HepG2 (cell line): ENCODE measurements at regions of chr2 and their contacts with region 1.

Region 1: GRCh38 chr2:102615622-102616436 is 3.5 kb upstream of the SLC9A2 start:
- DNase-seq: peak; percentile 60
- ATAC-seq: peak; percentile 93
- H3K4me3 ChIP-seq: no peak overlapping the region
- H3K27ac ChIP-seq: no peak overlapping the region
- H3K4me1 ChIP-seq: peaks cover 12% of the 10 kb centered on the region; the same call in 1 of the 2 replicates
- H3K27me3 ChIP-seq: peaks cover 8 to 45% of the 10 kb centered on the region in 2 experiments
- CTCF ChIP-seq: peak; percentile 93
- EP300 ChIP-seq: no peak
- POLR2A ChIP-seq: no peak
- RAD21 ChIP-seq: peak; percentile 76

Region 2: DNA sequence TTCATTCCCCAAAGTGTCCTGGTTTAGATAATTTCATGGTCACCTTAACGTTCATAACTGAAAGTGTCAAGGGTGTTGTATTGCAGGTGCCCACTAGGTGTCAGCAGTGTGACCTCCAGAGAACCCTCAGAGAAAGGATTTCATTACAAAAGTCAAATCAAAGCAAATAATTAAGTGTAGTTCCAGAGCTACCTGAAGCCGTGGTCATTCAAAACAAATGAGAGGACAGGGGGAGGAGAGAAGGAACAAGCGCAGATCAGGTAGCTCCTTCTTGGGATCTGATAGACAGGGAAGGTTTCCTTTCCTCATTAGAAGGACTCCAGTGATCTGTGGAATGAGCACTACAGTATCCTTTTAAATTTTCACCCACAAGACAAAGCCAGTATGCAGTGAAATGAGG is 142.8 kb before region 1 on chr2 and contains the start of gene SLC9A4:
- CTCF ChIA-PET with region 1: interaction called, 16 read pairs
- POLR2A ChIA-PET with region 1: no interaction called
- in situ Hi-C with region 1: loop called (anchors 5 kb)
- intact Hi-C with region 1: loop called (anchors 1 kb)
- DNase-seq: peak; percentile 52
- ATAC-seq: peak; percentile 77
- H3K4me3 ChIP-seq: no peak within 1 kb of the TSS
- H3K27ac ChIP-seq: no peak within 1 kb of the TSS
- H3K4me1 ChIP-seq: no peaks in the 10 kb centered on the region
- H3K27me3 ChIP-seq: no peaks in the 10 kb centered on the region; a peak in 1 of 5 replicates
- CTCF ChIP-seq: peak; percentile 83
- EP300 ChIP-seq: no peak
- POLR2A ChIP-seq: no peak
- RAD21 ChIP-seq: no peak
- total RNA-seq, gene SLC9A4: not detected in 2 replicates

Region 3: GRCh38 chr2:102520028-102520427 is 95.8 kb before region 1 on chr2:
- CTCF ChIA-PET with region 1: interaction called, 19 read pairs
- POLR2A ChIA-PET with region 1: no interaction called
- in situ Hi-C with region 1: no loop called
- intact Hi-C with region 1: loop called (anchors 1 kb)
- DNase-seq: peak; percentile 56
- ATAC-seq: peak; percentile 92
- H3K4me3 ChIP-seq: no peak overlapping the region
- H3K27ac ChIP-seq: no peak overlapping the region
- H3K4me1 ChIP-seq: peaks cover 16% of the 10 kb centered on the region
- H3K27me3 ChIP-seq: no peaks in the 10 kb centered on the region; a peak in 1 of 5 replicates
- CTCF ChIP-seq: peak; percentile 84
- EP300 ChIP-seq: no peak
- POLR2A ChIP-seq: no peak
- RAD21 ChIP-seq: peak; percentile 63

Region 4: DNA sequence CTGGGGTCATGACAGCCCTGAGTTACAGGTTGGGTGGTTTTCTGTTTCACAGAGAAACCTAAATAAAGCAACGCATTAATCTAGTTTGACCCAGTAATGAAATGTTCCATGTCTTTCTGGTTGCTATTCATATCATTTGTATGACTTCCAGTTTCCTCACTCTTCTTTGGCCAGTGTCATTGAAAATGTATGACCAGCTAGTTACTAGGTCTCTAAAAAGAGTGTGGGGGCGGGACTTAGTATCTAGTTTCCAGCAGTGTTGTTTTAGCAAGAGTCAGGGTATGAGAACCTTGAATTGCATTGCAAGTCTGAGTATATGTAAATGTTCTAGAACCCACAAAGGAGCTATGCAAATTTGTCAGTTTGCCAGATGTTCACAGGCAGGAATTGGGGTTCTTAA is 51.2 kb after region 1 on chr2:
- CTCF ChIA-PET with region 1: no interaction called
- POLR2A ChIA-PET with region 1: no interaction called
- in situ Hi-C with region 1: no loop called
- intact Hi-C with region 1: no loop called
- DNase-seq: no peak
- ATAC-seq: no peak
- H3K4me3 ChIP-seq: no peak overlapping the region
- H3K27ac ChIP-seq: no peak overlapping the region
- H3K4me1 ChIP-seq: no peaks in the 10 kb centered on the region
- H3K27me3 ChIP-seq: peaks cover 0 to 14% of the 10 kb centered on the region in 2 experiments; a peak in 1 of 5 replicates
- CTCF ChIP-seq: no peak
- EP300 ChIP-seq: no peak
- POLR2A ChIP-seq: no peak
- RAD21 ChIP-seq: no peak

Region 5: GRCh38 chr2:102703748-102704147 is 87.9 kb after region 1 on chr2:
- CTCF ChIA-PET with region 1: no interaction called
- POLR2A ChIA-PET with region 1: no interaction called
- in situ Hi-C with region 1: no loop called
- intact Hi-C with region 1: loop called (anchors 5 kb)
- DNase-seq: peak; percentile 33
- ATAC-seq: peak; percentile 88
- H3K4me3 ChIP-seq: no peak overlapping the region
- H3K27ac ChIP-seq: no peak overlapping the region
- H3K4me1 ChIP-seq: peaks cover 14% of the 10 kb centered on the region
- H3K27me3 ChIP-seq: no peaks in the 10 kb centered on the region
- CTCF ChIP-seq: peak; percentile 71
- EP300 ChIP-seq: no peak
- POLR2A ChIP-seq: no peak
- RAD21 ChIP-seq: 0 out of 2 replicates have a peak, but pooled peaks have one; percentile 52

Region 6: GRCh38 chr2:102736410-102737409 is 120.9 kb after region 1 on chr2:
- CTCF ChIA-PET with region 1: no interaction called
- POLR2A ChIA-PET with region 1: no interaction called
- in situ Hi-C with region 1: no loop called
- intact Hi-C with region 1: loop called (anchors 1 kb)
- DNase-seq: peak; percentile 80
- ATAC-seq: peak; percentile 94
- H3K4me3 ChIP-seq: peak overlapping the region; percentile 95 to 99 (median 96)
- H3K27ac ChIP-seq: peak overlapping the region; percentile 83
- H3K4me1 ChIP-seq: peaks cover 40% of the 10 kb centered on the region
- H3K27me3 ChIP-seq: peaks cover 0 to 3% of the 10 kb centered on the region in 2 experiments; a peak in 1 of 5 replicates
- CTCF ChIP-seq: no peak
- EP300 ChIP-seq: no peak
- POLR2A ChIP-seq: peak; percentile 82 to 97
- RAD21 ChIP-seq: peak; percentile 18; the same call in 1 of the 2 replicates

Region 7: GRCh38 chr2:102806250-102806837 is 190.5 kb after region 1 on chr2:
- CTCF ChIA-PET with region 1: no interaction called
- POLR2A ChIA-PET with region 1: no interaction called
- in situ Hi-C with region 1: no loop called
- intact Hi-C with region 1: loop called (anchors 5 kb)
- DNase-seq: peak; percentile 73
- ATAC-seq: peak; percentile 91
- H3K4me3 ChIP-seq: no peak overlapping the region
- H3K27ac ChIP-seq: no peak overlapping the region
- H3K4me1 ChIP-seq: peaks cover 27% of the 10 kb centered on the region
- H3K27me3 ChIP-seq: no peaks in the 10 kb centered on the region
- CTCF ChIP-seq: peak; percentile 94
- EP300 ChIP-seq: no peak
- POLR2A ChIP-seq: no peak
- RAD21 ChIP-seq: peak; percentile 78